Calu3 (cell line): ENCODE measurements at regions of chr2 and their contacts with region 1.

Region 1: GRCh38 chr2:16281451-16282336 is 341.3 kb downstream of the MYCN start:
- DNase-seq: peak; percentile 57
- H3K4me3 Mint-ChIP-seq: no peak overlapping the region
- H3K27ac Mint-ChIP-seq: no peak overlapping the region
- H3K4me1 Mint-ChIP-seq: no peaks in the 10 kb centered on the region
- H3K27me3 Mint-ChIP-seq: peaks cover 24% of the 10 kb centered on the region
- CTCF ChIP-seq: peak; percentile 51

Region 2: DNA sequence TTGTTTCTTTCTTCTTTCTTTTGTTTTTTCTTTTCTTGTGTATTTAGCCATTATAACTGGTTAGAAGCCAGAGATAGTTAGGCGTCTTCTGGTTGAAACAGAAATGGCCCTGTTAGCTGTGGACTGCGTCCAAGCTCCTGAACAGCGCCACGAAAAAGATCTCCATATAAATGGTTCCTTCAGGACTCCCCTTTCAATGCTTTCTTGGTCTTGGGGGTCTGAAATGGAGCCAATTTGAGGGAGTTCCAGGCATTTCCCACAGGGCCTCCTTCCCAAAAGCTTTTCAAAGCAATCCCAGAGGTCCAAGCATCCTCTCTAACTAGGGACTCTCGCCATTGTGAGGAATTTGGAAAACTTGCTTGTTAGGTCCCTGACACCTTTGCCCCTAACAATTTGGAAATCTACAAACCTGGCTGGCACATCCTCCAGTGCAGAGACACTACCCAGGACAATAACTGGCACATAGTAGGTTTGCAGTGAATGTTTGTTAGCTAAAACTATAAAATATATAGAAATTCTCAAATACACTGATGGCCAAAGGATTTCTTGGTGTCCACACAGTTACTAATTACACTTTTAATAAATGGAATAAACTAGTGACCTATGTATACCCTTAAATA is 261.2 kb before region 1 on chr2:
- CTCF ChIA-PET with region 1: no interaction called
- intact Hi-C with region 1: loop called (anchors 5 kb)
- DNase-seq: no peak
- H3K4me3 Mint-ChIP-seq: no peak overlapping the region
- H3K27ac Mint-ChIP-seq: no peak overlapping the region
- H3K4me1 Mint-ChIP-seq: peaks cover 20% of the 10 kb centered on the region
- H3K27me3 Mint-ChIP-seq: no peaks in the 10 kb centered on the region
- CTCF ChIP-seq: no peak

Region 3: DNA sequence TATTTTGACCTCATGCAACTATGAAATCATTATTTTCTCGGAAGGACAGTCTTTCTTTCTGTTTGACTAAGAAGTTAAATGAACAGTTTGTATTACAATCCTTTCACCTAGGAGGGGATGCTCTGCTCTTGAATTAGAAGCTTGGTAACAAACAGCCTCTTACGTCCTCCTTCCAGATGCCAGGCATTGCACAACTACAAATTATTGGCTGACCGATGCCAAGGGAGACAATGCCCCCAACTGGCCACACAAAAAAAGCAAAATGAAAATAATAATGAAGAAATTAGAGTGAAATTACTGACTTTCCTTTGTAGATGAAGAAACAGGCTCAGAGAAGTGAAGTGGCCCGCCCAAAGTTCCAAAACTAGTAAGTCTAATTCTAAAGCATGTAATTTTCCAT is 206.0 kb after region 1 on chr2:
- CTCF ChIA-PET with region 1: no interaction called
- intact Hi-C with region 1: loop called (anchors 10 kb)
- DNase-seq: peak; percentile 36
- H3K4me3 Mint-ChIP-seq: no peak overlapping the region
- H3K27ac Mint-ChIP-seq: no peak overlapping the region
- H3K4me1 Mint-ChIP-seq: no peaks in the 10 kb centered on the region
- H3K27me3 Mint-ChIP-seq: peaks cover 17% of the 10 kb centered on the region
- CTCF ChIP-seq: peak; percentile 28